Panc1 (cell line): ENCODE measurements at regions of chr17 and their contacts with region 1.

Region 1: GRCh38 chr17:47970704-47971463 is at the start of gene CDK5RAP3:
- DNase-seq: peak; percentile 90
- ATAC-seq: peak; percentile 97
- H3K4me3 ChIP-seq: peak within 1 kb of the TSS; percentile 84 to 90
- H3K27ac ChIP-seq: peak within 1 kb of the TSS; percentile 87
- H3K4me1 ChIP-seq: peaks cover 20% of the 10 kb centered on the region
- H3K27me3 ChIP-seq: no peaks in the 10 kb centered on the region
- CTCF ChIP-seq: peak; percentile 100
- total RNA-seq, gene CDK5RAP3: 193 TPM

Region 2: GRCh38 chr17:47905221-47905781 is 65.6 kb before region 1 on chr17:
- CTCF ChIA-PET with region 1: no interaction called
- POLR2A ChIA-PET with region 1: no interaction called
- in situ Hi-C with region 1: no loop called
- intact Hi-C with region 1: no loop called
- DNase-seq: no peak
- ATAC-seq: peak; percentile 74
- H3K4me3 ChIP-seq: no peak overlapping the region
- H3K27ac ChIP-seq: peak overlapping the region; percentile 30; the same call in 1 of the 2 replicates
- H3K4me1 ChIP-seq: peaks cover 16% of the 10 kb centered on the region; the same call in 1 of the 2 replicates
- H3K27me3 ChIP-seq: no peaks in the 10 kb centered on the region
- CTCF ChIP-seq: no peak

Region 3: DNA sequence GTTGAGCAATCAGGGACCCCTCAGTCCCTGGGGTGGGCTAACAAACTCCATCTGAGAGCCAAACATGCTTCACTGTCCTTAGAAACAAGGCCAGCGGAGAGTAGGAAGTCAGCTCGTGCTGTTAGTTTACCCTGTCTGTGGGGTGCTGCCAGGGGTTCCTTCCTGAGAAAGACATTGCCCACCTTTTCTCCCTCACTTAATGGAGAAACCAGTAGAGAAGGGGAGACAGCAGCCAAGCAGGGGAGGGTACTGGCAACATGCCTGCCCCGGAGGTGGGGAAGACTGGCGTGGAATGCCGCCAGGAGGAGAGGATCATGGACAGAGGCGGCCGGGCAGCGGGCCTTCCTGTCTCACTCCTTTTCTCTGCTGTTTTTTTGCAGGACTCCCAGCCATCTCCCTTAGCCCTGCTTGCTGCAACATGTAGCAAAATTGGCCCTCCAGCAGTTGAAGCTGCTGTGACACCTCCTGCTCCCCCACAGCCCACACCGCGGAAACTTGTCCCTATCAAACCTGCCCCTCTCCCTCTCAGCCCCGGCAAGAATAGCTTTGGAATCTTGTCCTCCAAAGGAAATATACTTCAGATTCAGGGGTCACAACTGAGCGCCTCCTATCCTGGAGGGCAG is 55.0 kb before region 1 on chr17:
- CTCF ChIA-PET with region 1: interaction called, 16 read pairs
- POLR2A ChIA-PET with region 1: no interaction called
- in situ Hi-C with region 1: no loop called
- intact Hi-C with region 1: no loop called
- DNase-seq: no peak
- ATAC-seq: 0 out of 2 replicates have a peak, but pooled peaks have one; percentile 13
- H3K4me3 ChIP-seq: no peak overlapping the region
- H3K27ac ChIP-seq: no peak overlapping the region
- H3K4me1 ChIP-seq: no peaks in the 10 kb centered on the region; the same call in 1 of the 2 replicates
- H3K27me3 ChIP-seq: no peaks in the 10 kb centered on the region
- CTCF ChIP-seq: no peak

Region 4: GRCh38 chr17:47949136-47949759 is 21.6 kb before region 1 on chr17:
- CTCF ChIA-PET with region 1: interaction called, 22 read pairs
- POLR2A ChIA-PET with region 1: interaction called, 11 read pairs
- in situ Hi-C with region 1: no loop called
- intact Hi-C with region 1: no loop called
- DNase-seq: no peak
- ATAC-seq: peak; percentile 90
- H3K4me3 ChIP-seq: peak overlapping the region in 1 of 2 experiments; percentile 34; a peak in 2 of 4 replicates
- H3K27ac ChIP-seq: peak overlapping the region; percentile 67
- H3K4me1 ChIP-seq: peaks cover 13% of the 10 kb centered on the region
- H3K27me3 ChIP-seq: no peaks in the 10 kb centered on the region
- CTCF ChIP-seq: peak; percentile 98

Region 5: DNA sequence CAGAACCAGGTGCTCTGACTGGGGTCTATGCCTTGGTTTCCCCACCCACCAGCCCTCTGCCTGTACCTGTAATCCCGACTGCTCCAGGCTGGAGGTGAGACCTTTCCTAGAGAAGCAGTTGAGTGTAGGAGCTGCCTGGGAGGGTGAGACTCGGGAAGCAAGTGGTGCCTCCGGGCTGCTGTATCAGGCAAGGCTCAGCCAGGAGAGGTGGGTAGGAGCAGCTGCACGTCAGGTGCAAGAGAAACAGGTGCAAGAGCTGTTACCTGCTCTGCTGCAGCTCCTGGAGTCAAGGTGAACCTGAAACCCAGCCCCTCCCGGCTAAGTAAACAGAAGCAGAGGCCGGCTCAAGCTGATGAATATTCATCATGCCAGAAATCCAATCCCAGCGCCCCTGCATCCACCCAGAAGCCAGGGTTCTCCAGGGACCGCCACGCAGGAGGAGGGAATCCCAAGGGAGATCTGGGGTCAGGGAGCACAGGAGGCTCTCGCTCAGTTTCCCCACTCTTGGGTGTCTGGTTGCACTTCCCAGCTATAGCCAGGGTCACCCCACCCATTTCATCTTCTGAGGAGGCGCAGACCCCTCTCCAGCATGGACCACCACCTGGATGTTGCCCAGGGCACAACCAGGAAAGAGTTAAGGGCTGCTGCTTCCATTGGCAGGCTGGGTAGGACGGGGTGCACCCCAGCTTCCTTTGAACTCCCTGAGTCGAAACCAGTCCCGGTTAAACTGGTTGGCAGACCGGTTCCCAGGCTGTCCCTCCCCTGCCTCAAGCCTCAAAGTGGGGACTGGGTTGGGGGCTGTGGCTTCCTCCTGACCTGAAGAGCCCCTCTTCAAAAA is 13.1 kb before region 1 on chr17 and contains the start of gene PRR15L:
- CTCF ChIA-PET with region 1: interaction called, 9 read pairs
- POLR2A ChIA-PET with region 1: interaction called, 14 read pairs
- in situ Hi-C with region 1: no loop called
- intact Hi-C with region 1: no loop called
- DNase-seq: no peak
- ATAC-seq: no peak
- H3K4me3 ChIP-seq: no peak within 1 kb of the TSS
- H3K27ac ChIP-seq: no peak within 1 kb of the TSS
- H3K4me1 ChIP-seq: peaks cover 16% of the 10 kb centered on the region
- H3K27me3 ChIP-seq: no peaks in the 10 kb centered on the region
- CTCF ChIP-seq: no peak
- total RNA-seq, gene PRR15L: 0.18 TPM

Region 6: DNA sequence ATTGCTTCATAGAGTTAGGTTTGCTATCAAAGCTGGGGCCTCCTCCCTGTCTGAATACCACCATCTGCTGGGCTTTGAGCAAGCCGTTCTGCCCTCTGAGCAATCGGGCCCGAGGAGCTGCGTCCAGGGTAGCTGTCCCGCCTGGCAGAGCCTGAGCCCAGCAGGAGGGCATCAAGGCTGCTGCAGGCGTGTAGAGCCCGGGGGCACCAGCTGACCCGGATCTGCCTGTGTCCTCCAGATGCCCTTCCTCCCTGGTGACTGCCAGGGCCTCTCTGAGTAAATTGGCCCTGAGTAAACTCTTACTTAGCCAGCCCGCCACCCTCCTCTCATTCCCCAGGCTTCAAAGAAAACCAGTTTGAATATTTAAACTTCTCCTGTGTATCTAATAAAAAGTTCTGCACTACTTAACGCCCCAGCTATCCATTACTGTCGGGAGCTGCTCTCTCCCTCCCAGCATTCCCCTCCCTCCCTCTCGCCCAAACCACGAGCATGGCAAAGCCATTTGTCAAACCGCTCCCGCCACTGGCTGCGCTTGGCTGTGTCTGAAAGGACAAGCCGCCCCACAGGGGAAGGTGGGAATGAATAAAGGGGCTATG is 16.5 kb after region 1 on chr17:
- CTCF ChIA-PET with region 1: no interaction called
- POLR2A ChIA-PET with region 1: no interaction called
- in situ Hi-C with region 1: no loop called
- intact Hi-C with region 1: no loop called
- DNase-seq: no peak
- ATAC-seq: peak; percentile 63
- H3K4me3 ChIP-seq: no peak overlapping the region
- H3K27ac ChIP-seq: peak overlapping the region; percentile 57; the same call in 1 of the 2 replicates
- H3K4me1 ChIP-seq: peaks cover 12% of the 10 kb centered on the region
- H3K27me3 ChIP-seq: no peaks in the 10 kb centered on the region
- CTCF ChIP-seq: no peak

Region 7: DNA sequence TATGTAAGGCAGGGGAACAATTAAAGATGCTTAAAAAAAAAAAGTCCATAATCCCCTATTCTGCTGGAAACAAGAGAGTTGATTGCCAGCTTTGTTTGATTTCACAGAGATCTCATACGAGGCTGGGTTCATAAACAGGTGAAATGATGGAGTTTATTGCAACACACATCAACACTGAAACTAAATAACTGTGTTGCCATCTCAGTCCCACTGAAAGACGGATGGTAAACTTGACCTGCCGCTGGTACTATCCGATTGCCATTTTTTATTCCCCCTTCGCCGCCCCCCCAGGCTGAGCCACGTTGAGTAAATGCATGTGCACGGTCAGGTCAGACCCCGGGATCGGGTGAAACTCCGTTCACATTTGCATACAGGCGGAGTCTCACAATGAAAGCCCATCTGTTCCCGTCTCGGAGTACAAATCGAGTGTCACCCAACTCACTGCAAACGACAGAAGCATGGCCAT is 339.9 kb after region 1 on chr17:
- CTCF ChIA-PET with region 1: no interaction called
- POLR2A ChIA-PET with region 1: no interaction called
- in situ Hi-C with region 1: no loop called
- intact Hi-C with region 1: no loop called
- DNase-seq: no peak
- ATAC-seq: no peak
- H3K4me3 ChIP-seq: no peak overlapping the region
- H3K27ac ChIP-seq: no peak overlapping the region
- H3K4me1 ChIP-seq: no peaks in the 10 kb centered on the region
- H3K27me3 ChIP-seq: no peaks in the 10 kb centered on the region; the same call in 1 of the 2 replicates
- CTCF ChIP-seq: no peak